Activated T-helper 1 cell treated with anti-CD3 and anti-CD28 coated beads, Interleukin-12 subunit alpha, Interleukin-12 subunit beta, Interleukin-2, Interleukin-4 antibody, amounts not matched to agents 30 ng/mL and 10 ng/mL and 1 ng/mL, durations not matched to agents 14 hours and 24 hours and 36 hours (primary cell): ENCODE measurements at regions of chr9 and their contacts with region 1.

Region 1: GRCh38 chr9:35814841-35815543 is at the start of gene HINT2:
- DNase-seq: peak; percentile 97
- H3K4me3 Mint-ChIP-seq: peak within 1 kb of the TSS; percentile 91
- H3K27ac Mint-ChIP-seq: peak within 1 kb of the TSS; percentile 96
- H3K4me1 Mint-ChIP-seq: peaks cover 31% of the 10 kb centered on the region
- H3K27me3 Mint-ChIP-seq: peaks cover 6% of the 10 kb centered on the region
- total RNA-seq, gene HINT2: 47.5 and 55.3 TPM in 2 replicates

Region 2: GRCh38 chr9:35071814-35072460 is 743.1 kb before region 1 on chr9:
- intact Hi-C with region 1: loop called (anchors 1 kb)
- DNase-seq: peak; percentile 72
- H3K4me3 Mint-ChIP-seq: peak overlapping the region; percentile 95
- H3K27ac Mint-ChIP-seq: peak overlapping the region; percentile 92
- H3K4me1 Mint-ChIP-seq: peaks cover 55% of the 10 kb centered on the region
- H3K27me3 Mint-ChIP-seq: no peaks in the 10 kb centered on the region

Region 3: GRCh38 chr9:35603987-35604577 is 210.9 kb before region 1 on chr9:
- intact Hi-C with region 1: loop called (anchors 1 kb)
- DNase-seq: peak; percentile 99
- H3K4me3 Mint-ChIP-seq: peak overlapping the region; percentile 91
- H3K27ac Mint-ChIP-seq: peak overlapping the region; percentile 99
- H3K4me1 Mint-ChIP-seq: peaks cover 34% of the 10 kb centered on the region
- H3K27me3 Mint-ChIP-seq: peaks cover 2% of the 10 kb centered on the region

Region 4: DNA sequence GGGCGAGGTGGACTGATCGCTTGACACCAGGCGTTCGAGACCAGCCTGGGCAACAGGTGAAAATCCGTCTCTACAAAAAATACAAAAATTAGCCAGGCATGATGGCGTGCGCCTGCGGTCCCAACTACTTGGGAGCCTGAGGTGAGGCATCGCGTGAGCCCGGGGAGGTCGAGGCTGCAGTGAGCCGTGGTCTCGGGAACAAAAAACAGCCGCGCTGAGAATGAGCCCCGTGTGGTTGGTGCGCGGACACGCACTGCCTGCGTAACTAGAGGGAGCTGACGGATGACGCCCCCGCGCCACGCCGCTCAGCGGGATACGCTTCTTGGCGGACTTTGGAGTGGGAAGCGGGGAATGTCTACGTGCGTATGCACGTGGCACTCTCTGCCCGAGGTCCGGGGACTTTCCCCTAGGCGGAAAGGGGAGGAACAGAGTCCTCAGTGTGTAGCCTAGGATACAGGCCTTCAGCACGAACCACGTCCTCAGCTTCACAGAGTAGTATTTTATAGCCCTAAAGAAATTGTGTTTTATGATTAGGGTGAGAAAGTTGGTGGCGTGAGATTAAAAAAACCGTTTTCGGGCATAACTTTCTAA is 157.4 kb before region 1 on chr9 and contains the start of gene RMRP:
- intact Hi-C with region 1: loop called (anchors 2 kb)
- DNase-seq: peak; percentile 88
- H3K4me3 Mint-ChIP-seq: peak within 1 kb of the TSS; percentile 84
- H3K27ac Mint-ChIP-seq: peak within 1 kb of the TSS; percentile 99
- H3K4me1 Mint-ChIP-seq: peaks cover 59% of the 10 kb centered on the region
- H3K27me3 Mint-ChIP-seq: peaks cover 2% of the 10 kb centered on the region
- total RNA-seq, gene RMRP: 5,317 and 5,787 TPM in 2 replicates

Region 5: GRCh38 chr9:35790385-35791296 is 24.4 kb before region 1 on chr9:
- intact Hi-C with region 1: loop called (anchors 1 kb)
- DNase-seq: peak; percentile 45
- H3K4me3 Mint-ChIP-seq: no peak overlapping the region
- H3K27ac Mint-ChIP-seq: no peak overlapping the region
- H3K4me1 Mint-ChIP-seq: peaks cover 10% of the 10 kb centered on the region
- H3K27me3 Mint-ChIP-seq: no peaks in the 10 kb centered on the region

Region 6: DNA sequence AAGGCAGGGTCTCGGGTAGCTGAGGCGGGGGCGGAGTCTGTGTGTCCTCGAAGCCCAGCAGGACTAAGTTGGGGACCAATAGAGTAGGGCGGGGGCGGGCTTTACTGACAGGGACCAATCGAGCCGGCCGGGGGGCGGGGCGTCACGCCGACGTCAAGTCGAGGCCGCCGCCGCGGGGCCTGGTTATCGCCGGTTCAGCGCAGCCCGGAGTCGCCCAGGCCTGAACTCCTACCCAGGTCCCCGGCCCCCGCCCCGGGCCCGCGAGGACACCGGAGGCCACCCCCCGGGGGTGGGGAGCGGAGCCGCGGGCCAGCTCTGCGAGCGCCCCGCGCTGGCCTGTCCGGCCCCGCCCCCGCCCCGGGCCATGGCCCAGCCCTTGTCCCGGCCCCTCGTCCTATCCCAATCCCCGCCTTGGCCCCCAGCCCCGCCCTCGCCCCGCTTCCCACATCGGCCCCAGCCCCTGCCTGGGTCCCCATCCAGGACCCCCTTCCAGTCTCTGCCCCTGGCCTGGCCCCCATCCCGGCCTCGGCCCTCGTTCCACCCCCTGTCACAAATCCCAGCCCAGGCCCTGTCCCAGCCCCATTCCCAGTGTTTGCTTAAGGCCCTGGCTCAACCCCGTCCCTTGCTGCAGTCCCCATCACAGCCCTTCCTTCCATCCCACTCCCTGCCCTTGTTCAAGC is 14.2 kb after region 1 on chr9 and contains the start of gene TMEM8B:
- intact Hi-C with region 1: loop called (anchors 1 kb)
- DNase-seq: peak; percentile 86
- H3K4me3 Mint-ChIP-seq: peak within 1 kb of the TSS; percentile 91
- H3K27ac Mint-ChIP-seq: peak within 1 kb of the TSS; percentile 89
- H3K4me1 Mint-ChIP-seq: peaks cover 22% of the 10 kb centered on the region
- H3K27me3 Mint-ChIP-seq: peaks cover 3% of the 10 kb centered on the region
- total RNA-seq, gene TMEM8B: 1.7 and 1.9 TPM in 2 replicates

Region 7: DNA sequence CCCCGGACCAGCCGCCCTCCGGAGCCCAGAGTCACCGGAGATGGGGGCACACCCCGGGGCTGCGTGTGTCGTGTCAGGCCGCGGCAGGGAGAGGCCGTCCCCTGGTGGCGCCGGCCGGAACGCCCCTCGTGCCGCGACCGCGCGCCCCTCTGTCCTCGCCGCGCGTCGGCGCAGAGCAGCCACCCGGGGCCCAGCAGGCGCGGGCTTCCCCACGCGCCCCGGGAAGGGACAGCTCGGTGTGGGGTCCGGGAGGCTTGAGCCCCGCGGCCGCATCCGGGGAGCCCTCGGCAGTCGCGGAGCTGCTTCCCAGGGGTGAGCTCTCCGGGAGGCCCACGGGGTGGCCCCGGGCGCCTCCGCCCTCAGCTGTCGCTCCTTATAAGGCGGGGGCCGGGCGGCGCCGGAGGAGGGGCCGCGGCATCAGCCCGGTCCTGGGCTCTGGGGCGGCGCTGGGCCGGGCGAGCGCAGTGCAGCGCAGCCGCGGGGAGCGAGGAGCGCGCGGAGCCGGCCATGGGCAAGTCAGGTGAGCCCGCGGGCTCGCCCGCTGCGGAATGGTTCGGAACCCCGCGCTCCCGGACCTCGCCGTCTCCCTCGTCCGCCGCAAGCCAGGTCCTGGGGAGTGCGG is 321.4 kb after region 1 on chr9 and contains the start of gene GLIPR2:
- intact Hi-C with region 1: loop called (anchors 10 kb)
- DNase-seq: peak; percentile 81
- H3K4me3 Mint-ChIP-seq: peak within 1 kb of the TSS; percentile 93
- H3K27ac Mint-ChIP-seq: peak within 1 kb of the TSS; percentile 83
- H3K4me1 Mint-ChIP-seq: peaks cover 50% of the 10 kb centered on the region
- H3K27me3 Mint-ChIP-seq: peaks cover 20% of the 10 kb centered on the region
- total RNA-seq, gene GLIPR2: 26.3 and 27.5 TPM in 2 replicates

Region 8: DNA sequence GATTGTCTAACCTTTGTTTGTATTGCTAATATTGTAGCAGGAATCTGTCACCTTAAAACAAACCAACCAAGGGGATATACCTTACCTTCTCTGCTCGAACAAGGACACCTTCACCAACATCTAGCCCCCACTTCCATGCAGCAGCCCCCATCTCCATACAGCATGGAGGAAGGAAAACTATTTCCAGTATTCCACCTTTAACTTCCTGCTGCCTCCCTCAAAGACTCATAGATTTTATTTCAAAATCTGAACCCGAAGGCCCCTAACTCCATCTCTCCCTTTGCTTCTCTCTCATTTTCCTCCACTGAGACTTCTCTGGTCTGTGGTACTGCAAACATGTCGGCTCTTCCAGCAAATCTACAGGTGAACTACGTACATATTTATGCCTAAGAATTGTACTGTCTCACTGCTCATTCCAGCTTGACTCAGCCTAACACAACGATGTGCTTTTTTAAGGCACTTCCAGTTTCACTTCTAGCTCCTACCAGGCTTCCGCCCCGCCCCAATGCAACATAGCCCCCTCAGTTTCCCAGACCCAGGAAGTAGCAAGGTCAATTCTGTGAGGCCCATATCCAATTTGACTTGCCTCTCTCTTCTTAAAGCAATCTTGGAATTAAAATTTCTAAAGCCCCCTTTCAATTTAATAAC is 655.8 kb after region 1 on chr9:
- intact Hi-C with region 1: no loop called
- DNase-seq: peak; percentile 54
- H3K4me3 Mint-ChIP-seq: peak overlapping the region; percentile 80
- H3K27ac Mint-ChIP-seq: peak overlapping the region; percentile 86
- H3K4me1 Mint-ChIP-seq: peaks cover 29% of the 10 kb centered on the region
- H3K27me3 Mint-ChIP-seq: no peaks in the 10 kb centered on the region